CD8-positive, alpha-beta T cell (primary cell): ENCODE measurements at regions of chr6 and their contacts with region 1.

Region 1: GRCh38 chr6:107674995-107675738 is 148.9 kb downstream of the SCML4 start:
- DNase-seq: peak; percentile 74 to 93 (median 90)
- ATAC-seq: peak; percentile 99
- H3K4me3 ChIP-seq: peak overlapping the region; percentile 9
- H3K4me3 Mint-ChIP-seq: peak overlapping the region; percentile 79
- H3K27ac ChIP-seq: peak overlapping the region; percentile 15 to 50
- H3K27ac Mint-ChIP-seq: peak overlapping the region; percentile 93
- H3K4me1 ChIP-seq: peaks cover 13% of the 10 kb centered on the region
- H3K4me1 Mint-ChIP-seq: peaks cover 15% of the 10 kb centered on the region
- H3K27me3 ChIP-seq: no peaks in the 10 kb centered on the region
- H3K27me3 Mint-ChIP-seq: no peaks in the 10 kb centered on the region
- CTCF ChIP-seq: peak; percentile 84

Region 2: GRCh38 chr6:106556368-106556960 is 1118.7 kb before region 1 on chr6:
- CTCF ChIA-PET with region 1: no interaction called
- POLR2A ChIA-PET with region 1: no interaction called
- intact Hi-C with region 1: no loop called
- DNase-seq: peak in 2 of 9 experiments; percentile 48 to 63
- ATAC-seq: peak; percentile 70
- H3K4me3 ChIP-seq: no peak overlapping the region
- H3K4me3 Mint-ChIP-seq: no peak overlapping the region
- H3K27ac ChIP-seq: no peak overlapping the region
- H3K27ac Mint-ChIP-seq: no peak overlapping the region
- H3K4me1 ChIP-seq: no peaks in the 10 kb centered on the region
- H3K4me1 Mint-ChIP-seq: no peaks in the 10 kb centered on the region
- H3K27me3 ChIP-seq: no peaks in the 10 kb centered on the region
- H3K27me3 Mint-ChIP-seq: no peaks in the 10 kb centered on the region
- CTCF ChIP-seq: peak; percentile 62

Region 3: DNA sequence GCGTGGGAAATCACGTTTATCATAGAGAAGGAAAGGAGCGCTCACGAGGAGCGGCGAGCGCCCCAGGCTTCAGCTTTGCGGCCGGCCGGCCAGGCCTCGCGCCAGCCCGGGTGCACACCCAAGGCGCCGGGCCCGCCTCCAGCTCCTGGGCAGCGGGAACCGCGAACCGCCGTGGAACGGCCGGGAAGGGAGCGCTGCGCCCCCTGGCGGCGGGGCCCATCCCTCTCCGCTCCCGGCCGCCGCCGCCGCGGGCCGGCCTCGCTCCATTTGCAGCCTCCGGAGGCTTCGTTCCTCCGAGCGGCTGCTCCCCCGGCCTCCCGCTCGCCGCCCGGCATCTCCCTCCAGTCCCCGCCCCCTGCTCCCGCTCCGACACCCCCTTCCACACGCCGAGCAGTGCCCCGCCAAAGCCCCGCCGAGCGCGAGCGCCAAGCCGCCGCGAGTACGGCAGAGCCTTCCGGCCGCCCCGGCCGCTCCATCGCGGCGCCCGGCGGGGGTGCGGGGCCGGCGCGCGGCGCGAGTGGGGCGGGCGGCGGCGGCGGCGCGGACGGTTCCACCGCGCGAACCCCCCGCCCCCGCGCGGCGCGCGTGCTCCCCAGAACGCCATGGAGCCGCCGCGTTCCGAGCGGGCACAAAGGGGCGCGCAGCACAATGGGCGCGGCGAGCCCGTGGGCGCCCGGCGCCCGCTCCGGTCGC is 560.8 kb before region 1 on chr6:
- CTCF ChIA-PET with region 1: no interaction called
- POLR2A ChIA-PET with region 1: no interaction called
- intact Hi-C with region 1: loop called in 1 of 2 experiments (anchors 10 kb)
- DNase-seq: peak; percentile 28 to 83 (median 65)
- ATAC-seq: peak; percentile 53
- H3K4me3 ChIP-seq: peak overlapping the region; percentile 12 to 24
- H3K4me3 Mint-ChIP-seq: peak overlapping the region; percentile 83
- H3K27ac ChIP-seq: no peak overlapping the region
- H3K27ac Mint-ChIP-seq: no peak overlapping the region
- H3K4me1 ChIP-seq: peaks cover 11% of the 10 kb centered on the region
- H3K4me1 Mint-ChIP-seq: peaks cover 15% of the 10 kb centered on the region
- H3K27me3 ChIP-seq: peaks cover 0 to 8% of the 10 kb centered on the region in 2 experiments
- H3K27me3 Mint-ChIP-seq: no peaks in the 10 kb centered on the region
- CTCF ChIP-seq: peak; percentile 90

Region 4: GRCh38 chr6:107185391-107185970 is 489.7 kb before region 1 on chr6:
- CTCF ChIA-PET with region 1: no interaction called
- POLR2A ChIA-PET with region 1: no interaction called
- intact Hi-C with region 1: no loop called
- DNase-seq: no peak
- ATAC-seq: no peak
- H3K4me3 ChIP-seq: no peak overlapping the region
- H3K4me3 Mint-ChIP-seq: no peak overlapping the region
- H3K27ac ChIP-seq: no peak overlapping the region
- H3K27ac Mint-ChIP-seq: no peak overlapping the region
- H3K4me1 ChIP-seq: no peaks in the 10 kb centered on the region
- H3K4me1 Mint-ChIP-seq: no peaks in the 10 kb centered on the region
- H3K27me3 ChIP-seq: no peaks in the 10 kb centered on the region
- H3K27me3 Mint-ChIP-seq: no peaks in the 10 kb centered on the region
- CTCF ChIP-seq: no peak

Region 5: GRCh38 chr6:107318100-107318736 is 356.9 kb before region 1 on chr6:
- CTCF ChIA-PET with region 1: interaction called, 4 read pairs
- POLR2A ChIA-PET with region 1: no interaction called
- intact Hi-C with region 1: loop called (anchors 1 to 10 kb)
- DNase-seq: peak in 3 of 9 experiments; percentile 7 to 49 (median 34)
- ATAC-seq: peak; percentile 49
- H3K4me3 ChIP-seq: no peak overlapping the region
- H3K4me3 Mint-ChIP-seq: no peak overlapping the region
- H3K27ac ChIP-seq: no peak overlapping the region
- H3K27ac Mint-ChIP-seq: no peak overlapping the region
- H3K4me1 ChIP-seq: no peaks in the 10 kb centered on the region
- H3K4me1 Mint-ChIP-seq: peaks cover 3% of the 10 kb centered on the region
- H3K27me3 ChIP-seq: no peaks in the 10 kb centered on the region
- H3K27me3 Mint-ChIP-seq: no peaks in the 10 kb centered on the region
- CTCF ChIP-seq: no peak

Region 6: DNA sequence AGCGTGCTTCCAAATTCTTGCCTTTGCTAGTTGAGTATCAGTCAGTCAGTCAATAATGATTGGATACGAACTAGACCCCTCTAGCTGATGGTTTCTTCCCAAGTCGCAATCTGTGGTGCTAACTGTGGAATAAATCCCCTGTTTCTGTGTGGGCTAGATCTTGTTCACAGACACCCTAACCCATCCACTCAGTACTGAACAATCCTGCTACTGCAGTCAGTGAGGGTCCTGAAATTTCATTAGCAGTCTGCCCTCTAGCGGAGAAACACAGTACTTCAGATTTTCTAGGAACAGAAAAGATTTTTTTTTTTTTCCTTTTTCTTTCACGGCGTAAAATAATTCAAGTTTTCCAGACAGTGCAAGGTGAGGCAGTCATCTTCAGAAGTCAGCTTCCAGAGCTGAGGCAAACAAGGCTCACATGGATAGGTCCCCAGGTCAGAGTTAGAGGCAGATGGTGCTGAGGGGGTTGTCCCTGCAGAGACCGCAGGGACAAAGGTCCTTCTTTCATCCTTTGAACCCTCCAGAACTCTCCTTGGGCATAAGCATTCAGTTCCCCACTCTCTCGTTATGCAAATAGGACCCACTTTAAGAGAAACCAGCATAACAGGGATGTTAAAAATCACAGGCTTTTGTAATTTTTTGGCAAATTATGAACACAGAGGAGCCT is 29.3 kb after region 1 on chr6:
- CTCF ChIA-PET with region 1: interaction called, 6 read pairs
- POLR2A ChIA-PET with region 1: no interaction called
- intact Hi-C with region 1: loop called (anchors 2 kb)
- DNase-seq: peak in 3 of 9 experiments; percentile 45 to 66 (median 57)
- ATAC-seq: peak; percentile 70
- H3K4me3 ChIP-seq: no peak overlapping the region
- H3K4me3 Mint-ChIP-seq: no peak overlapping the region
- H3K27ac ChIP-seq: peak overlapping the region in 1 of 2 experiments; percentile 32
- H3K27ac Mint-ChIP-seq: peak overlapping the region; percentile 80
- H3K4me1 ChIP-seq: peaks cover 9% of the 10 kb centered on the region
- H3K4me1 Mint-ChIP-seq: peaks cover 49% of the 10 kb centered on the region
- H3K27me3 ChIP-seq: no peaks in the 10 kb centered on the region
- H3K27me3 Mint-ChIP-seq: no peaks in the 10 kb centered on the region
- CTCF ChIP-seq: peak; percentile 77

Region 7: GRCh38 chr6:107800564-107801164 is 125.5 kb after region 1 on chr6:
- CTCF ChIA-PET with region 1: no interaction called
- POLR2A ChIA-PET with region 1: no interaction called
- intact Hi-C with region 1: loop called in 1 of 2 experiments (anchors 2 kb)
- DNase-seq: peak in 2 of 9 experiments; percentile 43 to 60
- ATAC-seq: peak; percentile 47
- H3K4me3 ChIP-seq: no peak overlapping the region
- H3K4me3 Mint-ChIP-seq: no peak overlapping the region
- H3K27ac ChIP-seq: no peak overlapping the region
- H3K27ac Mint-ChIP-seq: peak overlapping the region; percentile 47
- H3K4me1 ChIP-seq: peaks cover 40% of the 10 kb centered on the region
- H3K4me1 Mint-ChIP-seq: peaks cover 65% of the 10 kb centered on the region
- H3K27me3 ChIP-seq: no peaks in the 10 kb centered on the region
- H3K27me3 Mint-ChIP-seq: no peaks in the 10 kb centered on the region
- CTCF ChIP-seq: peak; percentile 40

Region 8: GRCh38 chr6:108052706-108053105 is 377.5 kb after region 1 on chr6:
- CTCF ChIA-PET with region 1: interaction called, 12 read pairs
- POLR2A ChIA-PET with region 1: no interaction called
- intact Hi-C with region 1: loop called (anchors 1 kb)
- DNase-seq: no peak
- ATAC-seq: no peak
- H3K4me3 ChIP-seq: no peak overlapping the region
- H3K4me3 Mint-ChIP-seq: no peak overlapping the region
- H3K27ac ChIP-seq: no peak overlapping the region
- H3K27ac Mint-ChIP-seq: no peak overlapping the region
- H3K4me1 ChIP-seq: no peaks in the 10 kb centered on the region
- H3K4me1 Mint-ChIP-seq: no peaks in the 10 kb centered on the region
- H3K27me3 ChIP-seq: no peaks in the 10 kb centered on the region
- H3K27me3 Mint-ChIP-seq: no peaks in the 10 kb centered on the region
- CTCF ChIP-seq: no peak